HCT116 (cell line): ENCODE measurements at regions of chr19 and their contacts with region 1.

Region 1: GRCh38 chr19:48784540-48784939 is 26.3 kb downstream of the BCAT2 start:
- DNase-seq: no peak
- ATAC-seq: no peak
- H3K4me3 ChIP-seq: no peak overlapping the region
- H3K27ac ChIP-seq: no peak overlapping the region
- H3K4me1 ChIP-seq: peaks cover 22 to 34% of the 10 kb centered on the region in 2 experiments; a peak in 3 of 4 replicates
- H3K27me3 ChIP-seq: no peaks in the 10 kb centered on the region
- CTCF ChIP-seq: no peak
- POLR2A ChIP-seq: no peak
- RAD21 ChIP-seq: no peak

Region 2: GRCh38 chr19:48646001-48646721 is 138.4 kb before region 1 on chr19 and contains the start of gene CA11:
- CTCF ChIA-PET with region 1: interaction called, 7 read pairs
- POLR2A ChIA-PET with region 1: interaction called, 6 read pairs
- RAD21 ChIA-PET with region 1: interaction called in 1 of 2 experiments, 3 read pairs
- intact Hi-C with region 1: loop called (anchors 2 kb)
- DNase-seq: peak; percentile 77
- ATAC-seq: peak; percentile 83
- H3K4me3 ChIP-seq: peak within 1 kb of the TSS; percentile 55 to 58
- H3K27ac ChIP-seq: peak within 1 kb of the TSS; percentile 83
- H3K4me1 ChIP-seq: peaks cover 19 to 52% of the 10 kb centered on the region in 2 experiments
- H3K27me3 ChIP-seq: no peaks in the 10 kb centered on the region
- CTCF ChIP-seq: peak in 2 of 3 experiments; percentile 83 to 91; a peak in 5 of 6 replicates
- POLR2A ChIP-seq: no peak
- RAD21 ChIP-seq: peak; percentile 95
- total RNA-seq, gene CA11: 29.6 TPM

Region 3: GRCh38 chr19:48835734-48836088 is 51.2 kb after region 1 on chr19:
- CTCF ChIA-PET with region 1: interaction called, 49 read pairs
- POLR2A ChIA-PET with region 1: interaction called, 5 read pairs
- RAD21 ChIA-PET with region 1: interaction called in 1 of 2 experiments, 4 read pairs
- intact Hi-C with region 1: loop called (anchors 1 kb)
- DNase-seq: peak; percentile 76
- ATAC-seq: peak; percentile 93
- H3K4me3 ChIP-seq: peak overlapping the region; percentile 29 to 35; a peak in 3 of 4 replicates
- H3K27ac ChIP-seq: peak overlapping the region; percentile 56
- H3K4me1 ChIP-seq: peaks cover 5 to 23% of the 10 kb centered on the region in 2 experiments; a peak in 3 of 4 replicates
- H3K27me3 ChIP-seq: no peaks in the 10 kb centered on the region
- CTCF ChIP-seq: peak; percentile 86 to 92 (median 91)
- POLR2A ChIP-seq: no peak
- RAD21 ChIP-seq: peak; percentile 97

Region 4: GRCh38 chr19:48842789-48843162 is 58.2 kb after region 1 on chr19:
- CTCF ChIA-PET with region 1: interaction called, 49 read pairs
- POLR2A ChIA-PET with region 1: interaction called, 6 read pairs
- RAD21 ChIA-PET with region 1: interaction called, 7 to 10 read pairs
- intact Hi-C with region 1: loop called (anchors 1 kb)
- DNase-seq: peak; percentile 46
- ATAC-seq: peak; percentile 79
- H3K4me3 ChIP-seq: no peak overlapping the region
- H3K27ac ChIP-seq: no peak overlapping the region
- H3K4me1 ChIP-seq: peaks cover 0 to 5% of the 10 kb centered on the region in 2 experiments; a peak in 1 of 4 replicates
- H3K27me3 ChIP-seq: no peaks in the 10 kb centered on the region
- CTCF ChIP-seq: peak; percentile 60 to 90 (median 75)
- POLR2A ChIP-seq: no peak
- RAD21 ChIP-seq: peak; percentile 73

Region 5: DNA sequence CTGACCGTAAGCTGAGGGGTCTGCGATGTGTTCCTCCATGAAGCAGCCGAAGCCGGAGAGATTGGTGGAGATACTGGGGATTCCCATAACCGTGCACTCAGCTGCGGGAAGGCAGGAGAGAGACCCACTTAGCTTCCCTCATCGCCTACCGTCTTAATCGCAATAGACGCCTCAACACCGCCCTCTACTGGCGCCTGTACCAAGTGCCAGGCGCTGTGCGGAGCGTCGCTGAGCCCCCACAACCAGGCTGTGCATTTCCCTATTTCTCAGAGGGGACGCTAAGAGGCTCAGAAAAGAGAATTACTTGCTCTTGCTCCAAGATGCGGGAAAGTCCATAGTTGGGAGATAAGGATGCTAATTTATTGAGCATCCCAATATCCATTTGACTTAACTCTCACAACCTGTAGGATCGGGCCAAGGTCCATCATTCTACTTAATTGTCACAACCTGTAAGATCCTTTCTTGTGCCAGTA is 186.4 kb after region 1 on chr19:
- CTCF ChIA-PET with region 1: interaction called, 13 read pairs
- POLR2A ChIA-PET with region 1: no interaction called
- RAD21 ChIA-PET with region 1: no interaction called
- intact Hi-C with region 1: loop called (anchors 1 kb)
- DNase-seq: no peak
- ATAC-seq: peak; percentile 71
- H3K4me3 ChIP-seq: no peak overlapping the region
- H3K27ac ChIP-seq: no peak overlapping the region
- H3K4me1 ChIP-seq: peaks cover 0 to 22% of the 10 kb centered on the region in 2 experiments; a peak in 3 of 4 replicates
- H3K27me3 ChIP-seq: no peaks in the 10 kb centered on the region
- CTCF ChIP-seq: peak in 2 of 3 experiments; percentile 94 to 95; a peak in 4 of 6 replicates
- POLR2A ChIP-seq: no peak
- RAD21 ChIP-seq: peak; percentile 88

Region 6: GRCh38 chr19:49073514-49074378 is 289.2 kb after region 1 on chr19:
- CTCF ChIA-PET with region 1: no interaction called
- POLR2A ChIA-PET with region 1: no interaction called
- RAD21 ChIA-PET with region 1: no interaction called
- intact Hi-C with region 1: loop called (anchors 2 kb)
- DNase-seq: peak; percentile 45
- ATAC-seq: peak; percentile 88
- H3K4me3 ChIP-seq: no peak overlapping the region
- H3K27ac ChIP-seq: no peak overlapping the region
- H3K4me1 ChIP-seq: peaks cover 10 to 11% of the 10 kb centered on the region in 2 experiments
- H3K27me3 ChIP-seq: no peaks in the 10 kb centered on the region
- CTCF ChIP-seq: peak; percentile 36 to 65 (median 49)
- POLR2A ChIP-seq: no peak
- RAD21 ChIP-seq: peak; percentile 68